IMR-90 (cell line): ENCODE measurements at regions of chr1 and their contacts with region 1.

Region 1: GRCh38 chr1:171644805-171645483 is 7.5 kb downstream of the MYOC start:
- DNase-seq: peak; percentile 82
- ATAC-seq: peak; percentile 97
- H3K4me3 ChIP-seq: no peak overlapping the region
- H3K27ac ChIP-seq: no peak overlapping the region
- H3K4me1 ChIP-seq: no peaks in the 10 kb centered on the region
- H3K27me3 ChIP-seq: peaks cover 6% of the 10 kb centered on the region; the same call in 1 of the 2 replicates
- CTCF ChIP-seq: peak; percentile 88
- POLR2A ChIP-seq: no peak
- RAD21 ChIP-seq: peak; percentile 84

Region 2: DNA sequence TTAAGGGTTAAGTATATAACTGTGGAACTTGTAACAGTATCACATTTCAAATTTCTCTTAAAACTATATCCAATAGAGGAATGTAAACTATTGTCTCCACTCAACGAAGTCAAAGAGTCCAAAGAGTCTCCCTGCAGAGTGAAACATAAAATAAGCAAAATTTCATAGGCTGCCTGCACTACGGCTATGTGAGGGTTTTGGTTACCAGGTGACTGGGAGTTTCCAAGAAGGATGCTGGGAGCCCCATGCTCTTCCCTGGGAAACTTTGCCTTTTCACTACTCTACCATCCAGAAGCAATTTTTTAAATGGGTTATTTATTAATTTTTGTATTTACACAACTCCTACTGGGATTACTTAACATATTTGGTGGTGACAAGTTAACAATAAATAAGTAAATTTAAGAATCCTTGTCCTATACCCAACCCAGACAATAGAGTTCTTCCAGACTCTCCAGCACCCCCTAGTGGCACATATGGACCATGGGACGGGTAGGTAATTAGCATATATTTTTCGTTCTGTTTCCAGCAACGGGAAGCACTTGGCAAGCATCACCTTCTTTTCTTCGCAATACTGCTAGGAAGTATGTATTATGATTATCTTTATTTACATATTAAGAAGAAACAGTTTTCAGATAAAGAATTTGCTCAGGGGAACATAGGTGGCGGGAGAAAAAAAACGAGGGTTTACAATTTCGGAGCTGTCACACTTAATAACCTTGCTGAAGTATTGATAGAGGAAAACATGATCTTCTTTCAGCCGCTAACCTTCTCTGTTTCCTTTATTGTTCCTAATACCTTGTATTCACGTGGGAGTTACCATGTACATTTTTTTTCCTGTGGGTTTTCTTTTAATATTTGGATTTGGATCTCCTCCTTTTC is 456.3 kb before region 1 on chr1:
- CTCF ChIA-PET with region 1: no interaction called
- POLR2A ChIA-PET with region 1: no interaction called
- dilution Hi-C with region 1: no loop called
- in situ Hi-C with region 1: no loop called
- intact Hi-C with region 1: no loop called
- DNase-seq: peak; percentile 65
- ATAC-seq: peak; percentile 80
- H3K4me3 ChIP-seq: no peak overlapping the region
- H3K27ac ChIP-seq: peak overlapping the region; percentile 17; the same call in 1 of the 2 replicates
- H3K4me1 ChIP-seq: peaks cover 2% of the 10 kb centered on the region; the same call in 1 of the 2 replicates
- H3K27me3 ChIP-seq: no peaks in the 10 kb centered on the region
- CTCF ChIP-seq: peak; percentile 73
- POLR2A ChIP-seq: no peak
- RAD21 ChIP-seq: peak; percentile 64

Region 3: DNA sequence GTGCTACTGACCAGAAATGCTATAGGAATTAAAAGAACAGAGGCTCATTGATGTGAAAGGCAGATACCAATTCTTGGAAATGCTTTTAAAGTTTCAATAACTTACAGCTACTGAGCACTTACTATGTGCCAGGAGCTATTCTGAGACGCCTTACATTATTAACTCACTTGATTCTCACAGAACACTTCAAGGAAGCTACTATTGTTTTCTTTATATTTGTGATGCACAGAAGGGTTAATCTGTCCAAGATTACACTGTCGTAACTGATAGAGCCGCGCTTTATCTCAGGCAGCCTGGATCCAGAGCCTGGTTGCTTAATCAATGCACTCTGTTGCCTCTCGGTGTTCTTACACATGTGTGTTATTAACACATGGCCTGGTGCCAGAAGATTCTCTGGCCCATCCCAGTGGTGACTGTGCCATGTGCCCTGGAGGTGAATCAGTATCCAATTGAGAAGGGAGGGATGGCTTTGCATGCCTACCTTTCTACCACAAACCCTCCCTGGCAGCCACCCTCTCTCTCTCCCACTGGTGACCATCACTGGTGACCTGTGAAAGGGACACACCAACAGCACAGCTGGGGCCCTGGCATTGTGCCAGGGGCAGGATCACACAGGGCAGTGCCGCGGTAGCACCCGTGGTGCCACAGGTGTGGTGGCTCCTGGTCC is 387.9 kb before region 1 on chr1:
- CTCF ChIA-PET with region 1: no interaction called
- POLR2A ChIA-PET with region 1: no interaction called
- dilution Hi-C with region 1: no loop called
- in situ Hi-C with region 1: no loop called
- intact Hi-C with region 1: no loop called
- DNase-seq: no peak
- ATAC-seq: no peak
- H3K4me3 ChIP-seq: no peak overlapping the region
- H3K27ac ChIP-seq: no peak overlapping the region
- H3K4me1 ChIP-seq: 0 out of 2 replicates have a peak, but pooled peaks cover 2% of the 10 kb centered on the region
- H3K27me3 ChIP-seq: peaks cover 2% of the 10 kb centered on the region
- CTCF ChIP-seq: no peak
- POLR2A ChIP-seq: no peak
- RAD21 ChIP-seq: no peak

Region 4: GRCh38 chr1:171654942-171655745 is 10.2 kb after region 1 on chr1:
- CTCF ChIA-PET with region 1: interaction called, 23 read pairs
- POLR2A ChIA-PET with region 1: no interaction called
- dilution Hi-C with region 1: no loop called
- in situ Hi-C with region 1: no loop called
- intact Hi-C with region 1: no loop called
- DNase-seq: peak; percentile 48
- ATAC-seq: peak; percentile 76
- H3K4me3 ChIP-seq: no peak overlapping the region
- H3K27ac ChIP-seq: no peak overlapping the region
- H3K4me1 ChIP-seq: peaks cover 8% of the 10 kb centered on the region
- H3K27me3 ChIP-seq: peaks cover 3% of the 10 kb centered on the region
- CTCF ChIP-seq: peak; percentile 58
- POLR2A ChIP-seq: no peak
- RAD21 ChIP-seq: peak; percentile 46

Region 5: GRCh38 chr1:171715813-171716251 is 70.9 kb after region 1 on chr1:
- CTCF ChIA-PET with region 1: interaction called, 9 read pairs
- POLR2A ChIA-PET with region 1: no interaction called
- dilution Hi-C with region 1: no loop called
- in situ Hi-C with region 1: no loop called
- intact Hi-C with region 1: loop called (anchors 2 kb)
- DNase-seq: peak; percentile 27
- ATAC-seq: peak; percentile 62
- H3K4me3 ChIP-seq: no peak overlapping the region
- H3K27ac ChIP-seq: 0 out of 2 replicates have a peak overlapping the region, but pooled peaks have one; percentile 15
- H3K4me1 ChIP-seq: peaks cover 8% of the 10 kb centered on the region
- H3K27me3 ChIP-seq: no peaks in the 10 kb centered on the region
- CTCF ChIP-seq: peak; percentile 47
- POLR2A ChIP-seq: no peak
- RAD21 ChIP-seq: peak; percentile 28; the same call in 1 of the 2 replicates

Region 6: GRCh38 chr1:171781176-171781875 is 136.4 kb after region 1 on chr1 and contains the start of gene METTL13:
- CTCF ChIA-PET with region 1: interaction called, 6 read pairs
- POLR2A ChIA-PET with region 1: no interaction called
- dilution Hi-C with region 1: no loop called
- in situ Hi-C with region 1: no loop called
- intact Hi-C with region 1: loop called (anchors 5 kb)
- DNase-seq: peak; percentile 99
- ATAC-seq: peak; percentile 98
- H3K4me3 ChIP-seq: peak within 1 kb of the TSS; percentile 81
- H3K27ac ChIP-seq: peak within 1 kb of the TSS; percentile 77
- H3K4me1 ChIP-seq: no peaks in the 10 kb centered on the region
- H3K27me3 ChIP-seq: no peaks in the 10 kb centered on the region
- CTCF ChIP-seq: 0 out of 2 replicates have a peak, but pooled peaks have one; percentile 6
- POLR2A ChIP-seq: peak; percentile 87
- RAD21 ChIP-seq: 0 out of 2 replicates have a peak, but pooled peaks have one; percentile 9
- total RNA-seq, gene METTL13: 25.8 and 26.3 TPM in 2 replicates

Region 7: GRCh38 chr1:171801487-171801891 is 156.5 kb after region 1 on chr1:
- CTCF ChIA-PET with region 1: interaction called, 11 read pairs
- POLR2A ChIA-PET with region 1: no interaction called
- dilution Hi-C with region 1: no loop called
- in situ Hi-C with region 1: no loop called
- intact Hi-C with region 1: loop called (anchors 5 kb)
- DNase-seq: peak; percentile 51
- ATAC-seq: peak; percentile 65
- H3K4me3 ChIP-seq: no peak overlapping the region
- H3K27ac ChIP-seq: no peak overlapping the region
- H3K4me1 ChIP-seq: peaks cover 4% of the 10 kb centered on the region; the same call in 1 of the 2 replicates
- H3K27me3 ChIP-seq: no peaks in the 10 kb centered on the region
- CTCF ChIP-seq: peak; percentile 71
- POLR2A ChIP-seq: no peak
- RAD21 ChIP-seq: peak; percentile 71